ENCODE measurements at regions of chrX and their contacts with region 1.

Region 1: GRCh38 chrX:17888421-17888820 is 27.3 kb upstream of the RAI2 start:
- DNase-seq: no peak
- ATAC-seq: no peak
- H3K4me3 ChIP-seq: no peak overlapping the region
- H3K27ac ChIP-seq: no peak overlapping the region
- H3K4me1 ChIP-seq: no peaks in the 10 kb centered on the region
- H3K27me3 ChIP-seq: peaks cover 6% of the 10 kb centered on the region; the same call in 1 of the 2 replicates
- CTCF ChIP-seq: no peak; a peak in 1 of 6 replicates
- POLR2A ChIP-seq: no peak
- RAD21 ChIP-seq: no peak

Region 2: DNA sequence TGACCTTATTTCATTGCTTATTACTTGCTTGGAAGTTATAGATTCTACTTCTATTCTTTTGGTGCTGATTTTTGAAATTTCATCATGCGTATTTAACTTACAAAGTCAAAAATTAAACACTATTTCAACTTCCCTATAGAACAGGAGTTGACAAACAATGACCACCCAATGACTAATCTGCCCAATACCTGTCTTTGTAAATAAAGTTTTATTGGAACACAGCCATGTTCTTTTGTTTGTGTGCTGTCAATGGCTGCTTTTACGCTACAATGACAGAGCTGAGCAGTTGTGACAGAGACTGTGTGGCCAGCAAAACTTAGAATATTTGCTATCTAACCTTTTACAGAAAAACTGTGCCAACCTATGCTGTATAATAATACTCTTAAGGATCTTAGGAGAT is 68.8 kb after region 1 on chrX:
- CTCF ChIA-PET with region 1: no interaction called
- POLR2A ChIA-PET with region 1: no interaction called
- RAD21 ChIA-PET with region 1: no interaction called
- intact Hi-C with region 1: loop called (anchors 5 kb)
- DNase-seq: no peak
- ATAC-seq: no peak
- H3K4me3 ChIP-seq: no peak overlapping the region
- H3K27ac ChIP-seq: no peak overlapping the region
- H3K4me1 ChIP-seq: no peaks in the 10 kb centered on the region
- H3K27me3 ChIP-seq: 0 out of 2 replicates have a peak, but pooled peaks cover 8% of the 10 kb centered on the region
- CTCF ChIP-seq: no peak
- POLR2A ChIP-seq: no peak
- RAD21 ChIP-seq: no peak

Region 3: GRCh38 chrX:18116236-18116635 is 227.8 kb after region 1 on chrX:
- CTCF ChIA-PET with region 1: no interaction called
- POLR2A ChIA-PET with region 1: no interaction called
- RAD21 ChIA-PET with region 1: no interaction called
- intact Hi-C with region 1: no loop called
- DNase-seq: no peak
- ATAC-seq: no peak
- H3K4me3 ChIP-seq: no peak overlapping the region
- H3K27ac ChIP-seq: no peak overlapping the region
- H3K4me1 ChIP-seq: no peaks in the 10 kb centered on the region
- H3K27me3 ChIP-seq: no peaks in the 10 kb centered on the region
- CTCF ChIP-seq: no peak
- POLR2A ChIP-seq: no peak
- RAD21 ChIP-seq: no peak